ENCODE measurements at regions of chr9 and their contacts with region 1.

Region 1: DNA sequence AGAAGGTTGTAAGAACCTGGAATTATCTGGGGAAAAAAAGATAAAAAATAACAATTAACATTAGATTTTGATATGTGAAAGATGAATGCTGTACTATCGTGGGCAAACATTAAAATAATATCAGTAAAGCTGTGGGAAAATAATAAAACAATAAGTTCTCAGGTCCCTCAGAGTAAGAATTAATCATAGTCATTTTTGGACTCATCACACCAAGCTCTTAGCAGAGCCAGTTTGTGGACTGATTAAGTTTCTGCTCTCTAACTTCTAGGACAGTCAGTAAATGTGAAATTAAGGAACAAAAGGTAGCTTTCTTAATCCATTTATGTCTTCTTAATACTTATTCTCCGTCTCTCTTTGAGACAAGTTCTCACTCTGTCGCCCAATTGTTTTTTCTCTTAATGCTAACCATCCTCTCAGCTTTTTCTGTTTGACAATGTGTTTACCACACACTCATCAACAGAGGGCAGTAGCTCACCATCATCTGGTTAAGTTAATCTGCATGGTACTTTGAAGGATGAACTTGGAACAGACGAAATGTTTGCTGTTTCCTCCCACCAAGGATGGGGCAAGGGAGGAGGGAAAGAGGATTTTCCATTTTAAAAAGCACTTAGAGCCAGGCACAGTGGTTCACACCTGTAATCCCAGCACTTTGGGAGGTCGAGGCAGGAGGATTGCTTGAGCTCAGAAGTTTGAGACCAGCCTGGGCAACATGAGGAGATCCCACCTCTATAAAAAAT is 5.3 kb upstream of the ACO1 start:
- DNase-seq: peak; percentile 19 to 29
- ATAC-seq: peak; percentile 88

Region 2: DNA sequence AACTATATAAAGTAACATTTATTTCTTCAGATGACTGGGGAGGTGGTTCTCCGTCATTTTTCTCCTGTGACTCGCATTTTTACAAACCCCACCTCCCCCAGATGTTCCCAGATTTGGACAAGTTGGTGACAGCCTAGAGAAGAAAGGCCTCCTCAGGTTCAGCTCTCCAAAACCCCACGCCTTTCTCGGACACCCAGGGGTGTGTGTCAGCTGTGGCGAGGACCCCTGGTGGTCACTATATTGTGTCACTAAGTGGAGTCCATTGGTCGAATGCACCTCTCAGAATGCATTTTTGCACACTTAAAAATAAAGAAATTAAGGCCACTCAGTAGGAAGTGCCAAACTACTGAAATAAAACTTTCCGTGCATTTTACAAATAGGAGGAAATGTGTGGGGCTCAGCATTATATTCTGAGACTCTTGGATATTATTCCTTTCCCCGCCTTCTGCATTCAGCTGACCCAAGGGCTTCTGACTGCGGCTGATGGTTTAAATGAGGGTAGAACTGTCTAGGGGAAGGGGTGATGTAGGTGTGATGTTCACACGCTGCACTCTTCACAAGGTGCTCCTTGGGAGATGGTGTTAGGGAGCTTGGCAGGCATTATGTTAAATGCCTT is 52.9 kb after region 1 on chr9:
- intact Hi-C with region 1: no loop called
- DNase-seq: peak in 1 of 2 donors; percentile 58
- ATAC-seq: peak; percentile 53

Region 3: DNA sequence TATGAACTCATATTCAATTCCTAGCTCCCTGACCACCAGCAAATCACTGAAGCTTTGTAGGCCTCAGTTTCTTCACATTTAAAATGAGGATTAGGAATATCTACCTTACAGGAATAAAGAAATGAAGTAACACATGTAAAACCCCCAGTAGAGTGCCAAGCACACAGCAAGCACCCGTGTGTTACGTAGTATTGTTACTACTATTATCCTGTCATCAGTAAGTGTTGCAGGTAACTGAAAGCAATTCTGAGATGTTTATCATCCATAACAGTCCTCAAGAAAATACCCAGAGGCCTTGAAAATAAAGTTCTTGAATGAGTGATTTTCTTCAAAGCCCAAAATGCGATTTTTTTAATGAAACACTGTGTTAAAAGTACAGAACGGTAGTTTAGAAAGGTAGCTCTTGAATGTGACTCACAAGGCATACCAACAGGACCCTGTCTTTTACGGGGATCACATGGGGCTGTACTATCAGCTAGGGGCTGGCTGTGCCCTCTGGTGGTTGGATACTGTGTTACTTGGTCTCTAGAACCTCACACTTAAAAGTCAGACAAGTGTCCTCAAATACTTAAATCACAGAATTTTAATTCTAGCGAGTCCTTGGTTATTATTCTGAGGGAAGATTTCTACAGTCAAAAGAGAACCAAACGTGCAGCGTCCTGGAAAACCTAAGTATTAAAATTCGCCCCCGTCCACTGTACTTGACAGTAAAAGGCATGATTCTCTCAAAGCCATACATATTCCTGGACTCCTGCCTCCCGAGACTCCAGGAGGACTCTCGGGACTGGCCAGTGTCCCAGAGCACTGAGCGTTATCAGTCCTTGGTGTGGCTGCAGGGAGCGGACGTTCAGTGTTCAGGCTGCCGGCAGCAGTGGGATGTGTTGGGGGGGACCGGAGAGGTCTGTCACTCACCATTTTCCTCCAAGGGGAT is 193.1 kb after region 1 on chr9:
- intact Hi-C with region 1: loop called (anchors 5 to 10 kb)
- DNase-seq: peak; percentile 72 to 77
- ATAC-seq: peak; percentile 90

Region 4: GRCh38 chr9:32579706-32580331 is 200.7 kb after region 1 on chr9:
- intact Hi-C with region 1: loop called (anchors 2 to 10 kb)
- DNase-seq: peak; percentile 42 to 81
- ATAC-seq: peak; percentile 63

Region 5: DNA sequence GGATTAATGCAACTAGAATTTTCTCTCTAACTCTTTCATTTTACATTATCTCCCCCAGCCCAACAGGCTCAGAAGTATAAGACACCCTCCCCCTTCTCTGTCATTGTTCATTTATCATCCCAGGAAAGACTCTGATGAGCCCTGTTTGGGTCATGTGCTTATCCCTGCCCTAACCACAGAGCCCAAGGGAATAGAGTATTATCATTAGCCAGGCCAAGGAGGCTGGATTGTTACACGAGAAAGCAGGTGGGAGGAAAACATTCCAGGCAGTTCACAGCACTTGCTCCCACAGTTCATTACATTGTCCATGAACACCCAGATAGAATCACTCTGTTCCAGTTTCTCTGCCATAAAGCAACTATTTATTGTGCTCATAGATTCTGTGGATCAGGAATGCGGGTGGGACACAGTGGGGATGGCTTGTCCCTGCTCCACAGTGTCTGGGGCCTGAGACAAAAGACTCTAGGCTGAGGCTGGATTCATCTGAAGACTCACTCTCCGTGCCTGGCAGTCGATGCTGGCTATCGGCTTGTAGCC is 344.7 kb after region 1 on chr9:
- intact Hi-C with region 1: no loop called
- DNase-seq: no peak
- ATAC-seq: no peak

Region 6: GRCh38 chr9:32968101-32969011 is 589.2 kb after region 1 on chr9:
- intact Hi-C with region 1: loop called in 1 of 2 experiments (anchors 10 kb)
- DNase-seq: peak in 1 of 2 donors; percentile 68
- ATAC-seq: peak; percentile 39